AG04449 (cell line): ENCODE measurements at regions of chr5 and their contacts with region 1.

Region 1: DNA sequence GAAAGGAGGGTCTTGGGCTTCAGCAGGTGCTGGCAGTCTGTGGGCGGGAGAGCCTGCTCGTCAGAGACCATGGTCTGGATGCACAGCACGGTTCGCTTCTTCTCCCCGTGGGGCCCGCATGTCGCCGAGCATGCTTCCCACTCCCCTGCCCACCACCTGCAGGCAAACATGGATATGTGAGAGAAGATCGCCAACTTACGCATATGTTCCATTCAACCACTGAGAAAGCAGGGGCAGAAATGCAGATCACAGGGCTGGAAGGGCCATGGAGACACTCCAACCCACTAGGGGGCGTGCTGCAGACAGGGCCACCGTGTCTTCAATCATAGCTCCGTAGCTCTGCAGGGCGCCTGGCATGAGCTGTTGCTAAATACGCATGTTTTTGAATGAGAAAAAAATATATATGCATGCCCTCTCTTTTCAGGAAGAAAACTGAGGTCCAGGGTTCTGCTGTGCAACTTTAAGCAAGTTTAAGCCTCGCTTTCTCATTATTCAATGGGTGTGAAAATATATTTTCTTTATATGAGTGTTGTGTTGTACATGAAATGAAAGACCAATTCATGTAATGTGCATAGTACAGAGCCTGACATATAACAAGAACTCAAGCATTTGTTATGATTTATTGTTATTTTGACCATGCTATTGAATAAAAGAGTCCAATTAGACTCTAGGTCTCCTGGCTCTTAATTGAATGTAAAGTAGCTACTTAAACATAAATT is 148.0 kb downstream of the TARS1 start:
- DNase-seq: no peak
- H3K4me3 ChIP-seq: no peak overlapping the region
- CTCF ChIP-seq: peak; percentile 36

Region 2: DNA sequence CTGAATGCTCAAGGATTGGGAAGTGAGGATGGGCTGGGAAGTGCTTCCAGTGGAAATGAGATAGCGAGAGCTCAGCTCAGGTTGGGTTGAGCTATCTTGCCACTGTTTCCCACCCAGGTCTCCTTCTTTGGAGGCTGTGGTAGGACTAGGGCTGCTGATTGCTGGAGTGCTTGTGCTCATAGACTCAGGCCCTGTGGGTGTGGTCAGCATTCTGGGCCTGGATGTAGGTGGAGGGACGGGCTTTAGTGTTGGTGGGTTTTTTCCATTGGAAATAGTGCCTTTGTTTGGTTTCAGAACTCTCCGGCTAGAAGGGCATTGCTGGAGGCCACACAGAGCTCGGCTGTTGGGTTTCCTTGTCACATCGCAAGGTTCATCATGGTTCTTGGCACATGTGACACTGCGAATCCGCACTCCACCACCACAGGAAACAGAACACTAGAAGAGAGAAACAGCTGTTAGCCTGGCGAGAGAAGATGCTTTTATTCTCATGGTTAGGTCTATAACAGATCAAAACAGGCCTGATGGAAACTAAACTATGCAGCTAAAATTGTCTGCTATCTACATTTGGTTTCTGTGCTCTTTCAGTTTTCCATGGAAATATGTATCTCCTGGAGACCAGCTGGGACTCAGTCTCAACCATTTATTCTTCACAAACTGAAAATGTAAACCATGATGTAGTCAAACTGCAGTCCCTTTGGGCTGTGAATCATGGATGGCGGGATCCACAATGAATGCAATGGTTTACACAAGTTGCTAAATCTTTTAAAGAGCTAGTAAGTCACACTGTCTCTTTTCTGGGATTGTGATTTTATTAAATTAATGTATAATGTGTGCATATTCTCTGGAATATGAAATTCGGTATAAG is 11.9 kb before region 1 on chr5:
- CTCF ChIA-PET with region 1: interaction called, 32 read pairs
- POLR2A ChIA-PET with region 1: no interaction called
- DNase-seq: no peak
- H3K4me3 ChIP-seq: no peak overlapping the region
- CTCF ChIP-seq: no peak

Region 3: DNA sequence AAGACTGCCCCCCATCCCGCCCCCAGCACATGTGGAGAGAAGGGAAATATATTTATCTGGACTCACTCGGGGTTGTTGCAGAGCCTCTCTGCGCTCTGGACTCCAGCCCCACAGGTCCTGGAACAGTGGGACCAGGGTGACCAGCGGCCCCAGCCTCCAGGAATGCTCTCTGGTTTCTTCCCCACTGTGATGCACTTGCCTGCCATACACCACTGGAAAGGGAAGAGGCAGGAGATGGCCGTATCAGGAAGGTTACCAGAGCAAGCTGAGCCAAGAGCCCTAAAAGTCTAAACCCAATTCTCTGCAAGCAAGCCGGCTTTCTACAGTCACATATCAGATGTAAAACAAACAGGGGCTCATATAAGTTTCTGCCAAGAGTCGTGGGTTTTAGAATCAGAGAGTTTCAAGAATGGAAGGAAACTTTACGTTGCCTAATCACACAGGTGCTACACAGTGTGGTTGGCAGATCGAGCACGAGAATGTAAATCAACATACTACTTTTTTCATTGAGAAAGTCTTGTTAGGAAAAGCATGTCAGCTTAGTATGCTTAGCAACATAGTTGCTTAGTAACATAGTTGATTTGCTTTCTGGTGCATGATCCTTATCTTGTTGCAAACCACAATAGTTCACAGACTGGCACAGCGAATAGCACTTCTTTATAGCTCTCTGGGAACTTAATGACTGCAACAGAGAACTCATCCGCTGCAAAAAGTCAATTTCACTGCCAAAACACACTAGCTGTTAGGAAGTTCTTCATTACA is 53.1 kb after region 1 on chr5:
- CTCF ChIA-PET with region 1: no interaction called
- POLR2A ChIA-PET with region 1: no interaction called
- DNase-seq: peak; percentile 23
- H3K4me3 ChIP-seq: no peak overlapping the region
- CTCF ChIP-seq: no peak

Region 4: DNA sequence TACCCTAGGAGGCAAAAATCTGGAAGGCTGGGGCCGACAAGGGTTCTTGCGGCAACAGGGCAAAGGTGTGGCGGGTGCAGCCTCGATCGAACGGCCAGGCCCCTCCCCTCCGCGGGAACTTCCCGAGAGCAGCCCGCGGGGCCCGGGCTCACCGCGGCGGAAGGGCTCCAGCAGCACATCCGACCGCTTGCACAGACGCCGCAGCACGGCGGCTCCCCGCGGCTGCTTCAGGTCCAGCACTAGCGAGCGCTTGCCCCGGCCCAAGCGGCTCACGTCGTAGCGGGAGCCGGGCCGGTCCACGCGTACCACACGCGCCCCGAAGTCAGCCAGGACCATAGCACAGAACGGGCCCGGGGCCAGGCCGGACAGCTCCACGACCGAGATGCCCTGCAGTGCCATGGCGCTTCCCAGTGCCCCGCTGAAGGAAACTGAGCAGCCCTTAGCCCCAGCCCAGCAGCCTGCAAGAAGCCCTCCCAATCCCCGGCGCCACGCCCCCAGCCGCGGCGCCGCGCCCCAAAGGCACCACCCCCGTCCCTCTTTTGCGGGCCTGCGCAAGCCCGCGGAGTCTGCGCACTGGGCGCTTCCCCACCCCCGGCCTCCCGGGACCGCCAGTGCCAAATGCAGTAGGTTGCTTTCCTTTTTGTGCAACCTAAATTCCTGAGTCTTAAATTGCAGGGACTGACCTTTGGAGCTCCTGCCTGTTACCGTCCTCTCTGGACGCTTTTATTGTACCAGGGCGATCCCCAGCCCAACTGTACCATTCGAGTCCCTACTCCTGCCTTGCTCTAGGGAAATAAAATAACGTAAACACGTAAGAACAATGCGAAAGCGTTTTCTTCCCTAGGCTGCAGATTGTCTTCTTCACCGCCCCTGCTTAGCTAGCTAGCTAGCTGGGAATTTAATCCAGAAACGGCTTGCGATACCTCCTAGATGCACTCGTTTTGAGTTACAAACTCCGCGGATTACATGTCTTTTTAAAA is 419.1 kb after region 1 on chr5 and contains the start of gene AMACR:
- CTCF ChIA-PET with region 1: no interaction called
- POLR2A ChIA-PET with region 1: no interaction called
- DNase-seq: peak; percentile 33
- H3K4me3 ChIP-seq: peak within 1 kb of the TSS; percentile 75
- CTCF ChIP-seq: peak; percentile 14